HepG2 (cell line): ENCODE measurements at regions of chr2 and their contacts with region 1.

Region 1: DNA sequence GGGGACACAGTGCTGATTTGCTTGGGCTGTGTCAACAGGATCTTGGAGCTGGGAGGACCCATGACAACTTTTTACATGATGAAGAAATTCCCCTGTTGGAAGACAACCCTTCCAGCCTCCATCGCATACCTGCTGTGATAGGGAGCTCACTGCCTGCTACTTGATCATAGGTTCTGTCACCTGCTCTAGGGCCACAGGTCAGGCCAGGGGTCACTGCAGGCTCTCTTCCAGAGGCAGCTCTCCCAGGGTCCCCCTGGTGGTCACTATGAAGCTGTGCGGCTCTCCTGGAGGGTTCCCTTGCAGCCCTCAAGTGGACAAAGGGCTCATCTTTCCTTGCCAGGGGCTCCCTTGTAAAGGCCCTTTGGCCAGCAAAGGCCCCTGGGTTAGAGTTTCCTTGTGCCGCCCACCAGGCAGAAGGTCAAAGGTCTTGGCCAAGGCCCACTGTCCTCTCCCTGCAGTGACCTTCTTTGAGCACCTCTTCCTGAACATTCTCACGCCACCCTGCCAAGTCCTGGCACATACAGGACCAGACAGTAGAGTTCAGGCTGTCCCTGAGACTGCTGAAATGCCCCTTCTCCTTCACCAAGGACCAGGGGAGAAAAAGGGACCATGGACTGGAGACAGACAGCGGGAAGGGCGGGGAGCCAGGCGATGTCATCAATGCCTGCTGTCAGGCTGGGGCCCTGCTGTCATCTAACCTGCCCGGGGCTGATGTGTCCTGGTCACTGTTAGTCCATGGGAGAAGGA is 345.1 kb downstream of the DYSF start:
- DNase-seq: peak; percentile 61
- ATAC-seq: peak; percentile 92
- H3K4me3 ChIP-seq: no peak overlapping the region
- H3K27ac ChIP-seq: no peak overlapping the region
- H3K4me1 ChIP-seq: peaks cover 5% of the 10 kb centered on the region; the same call in 1 of the 2 replicates
- H3K27me3 ChIP-seq: peaks cover 0 to 31% of the 10 kb centered on the region in 2 experiments; a peak in 4 of 5 replicates
- CTCF ChIP-seq: peak; percentile 88
- EP300 ChIP-seq: no peak
- POLR2A ChIP-seq: no peak
- RAD21 ChIP-seq: peak; percentile 92

Region 2: GRCh38 chr2:71609958-71610357 is 188.5 kb before region 1 on chr2:
- CTCF ChIA-PET with region 1: interaction called, 18 read pairs
- POLR2A ChIA-PET with region 1: no interaction called
- in situ Hi-C with region 1: no loop called
- intact Hi-C with region 1: loop called (anchors 1 kb)
- DNase-seq: no peak
- ATAC-seq: peak; percentile 21; the same call in 2 of the 3 replicates
- H3K4me3 ChIP-seq: no peak overlapping the region
- H3K27ac ChIP-seq: no peak overlapping the region
- H3K4me1 ChIP-seq: peaks cover 5% of the 10 kb centered on the region
- H3K27me3 ChIP-seq: no peaks in the 10 kb centered on the region; a peak in 1 of 5 replicates
- CTCF ChIP-seq: peak; percentile 44; the same call in 1 of the 2 replicates
- EP300 ChIP-seq: no peak
- POLR2A ChIP-seq: no peak
- RAD21 ChIP-seq: 0 out of 2 replicates have a peak, but pooled peaks have one; percentile 21

Region 3: GRCh38 chr2:71995067-71995665 is 196.7 kb after region 1 on chr2:
- CTCF ChIA-PET with region 1: no interaction called
- POLR2A ChIA-PET with region 1: no interaction called
- in situ Hi-C with region 1: no loop called
- intact Hi-C with region 1: loop called (anchors 5 kb)
- DNase-seq: peak; percentile 43
- ATAC-seq: peak; percentile 47; the same call in 2 of the 3 replicates
- H3K4me3 ChIP-seq: no peak overlapping the region
- H3K27ac ChIP-seq: no peak overlapping the region
- H3K4me1 ChIP-seq: no peaks in the 10 kb centered on the region
- H3K27me3 ChIP-seq: 0 out of 5 replicates have a peak, but pooled peaks cover 0 to 7% of the 10 kb centered on the region in 2 experiments
- CTCF ChIP-seq: peak; percentile 63
- EP300 ChIP-seq: no peak
- POLR2A ChIP-seq: no peak
- RAD21 ChIP-seq: no peak